ENCODE measurements at regions of chr2 and their contacts with region 1.

Region 1: GRCh38 chr2:30711646-30712085 is 95.6 kb downstream of the CAPN13 start:
- DNase-seq: peak; percentile 72 to 92
- ATAC-seq: peak; percentile 57 to 78 (median 67)
- H3K4me3 ChIP-seq: no peak overlapping the region
- H3K27ac ChIP-seq: no peak overlapping the region
- H3K4me1 ChIP-seq: peaks cover 0 to 32% (median 8%) of the 10 kb centered on the region in 9 donors
- H3K27me3 ChIP-seq: no peaks in the 10 kb centered on the region
- CTCF ChIP-seq: peak; percentile 92 to 100 (median 99)

Region 2: DNA sequence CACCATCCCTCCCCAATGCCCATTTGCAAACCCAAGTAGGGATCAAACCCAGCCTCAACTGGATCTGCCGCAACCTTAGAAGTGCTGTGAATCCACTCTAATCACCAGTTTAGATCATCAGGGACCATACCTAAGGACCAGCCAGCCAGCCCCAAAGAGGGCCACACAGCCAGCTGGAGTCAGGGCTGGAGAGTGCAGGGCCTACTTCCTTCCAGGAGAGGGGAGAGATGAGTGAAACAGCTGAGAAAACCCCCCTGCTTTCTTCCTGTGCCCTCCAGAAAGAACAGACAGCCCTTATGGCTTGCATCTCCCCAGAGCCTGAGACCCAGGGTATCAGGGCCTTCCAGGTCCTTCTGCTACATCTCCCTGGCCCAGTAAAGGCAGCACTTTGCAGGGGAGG is 539.0 kb before region 1 on chr2:
- intact Hi-C with region 1: loop called in 4 of 10 experiments (anchors 5 kb)
- DNase-seq: no peak
- ATAC-seq: no peak
- H3K4me3 ChIP-seq: no peak overlapping the region
- H3K27ac ChIP-seq: no peak overlapping the region
- H3K4me1 ChIP-seq: peaks cover 0 to 6% (median 0%) of the 10 kb centered on the region in 9 donors
- H3K27me3 ChIP-seq: no peaks in the 10 kb centered on the region
- CTCF ChIP-seq: no peak

Region 3: DNA sequence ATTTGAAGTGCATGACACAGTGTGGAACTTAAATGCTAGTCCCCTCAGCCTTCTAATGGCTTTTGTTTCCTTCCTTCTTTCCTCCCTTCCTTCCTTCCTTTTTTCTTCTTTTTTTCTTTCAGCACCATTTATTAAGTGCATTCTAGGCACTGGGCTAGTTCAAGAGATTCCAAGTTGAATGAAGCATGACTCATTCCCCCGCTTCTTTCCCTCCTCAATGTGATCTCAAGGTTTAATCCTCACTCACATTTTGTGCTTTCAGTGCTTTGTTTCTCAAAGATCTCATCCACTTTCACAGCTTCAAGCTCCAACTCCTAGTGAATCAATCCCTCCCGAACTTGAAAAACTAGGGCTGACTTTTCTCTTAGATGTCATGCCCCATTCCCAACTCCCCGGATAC is 390.2 kb before region 1 on chr2:
- intact Hi-C with region 1: loop called in 1 of 10 experiments (anchors 10 kb)
- DNase-seq: no peak
- ATAC-seq: no peak
- H3K4me3 ChIP-seq: no peak overlapping the region
- H3K27ac ChIP-seq: peak overlapping the region in 1 of 10 donors; percentile 0
- H3K4me1 ChIP-seq: peaks cover 0 to 6% (median 0%) of the 10 kb centered on the region in 9 donors
- H3K27me3 ChIP-seq: no peaks in the 10 kb centered on the region
- CTCF ChIP-seq: no peak

Region 4: DNA sequence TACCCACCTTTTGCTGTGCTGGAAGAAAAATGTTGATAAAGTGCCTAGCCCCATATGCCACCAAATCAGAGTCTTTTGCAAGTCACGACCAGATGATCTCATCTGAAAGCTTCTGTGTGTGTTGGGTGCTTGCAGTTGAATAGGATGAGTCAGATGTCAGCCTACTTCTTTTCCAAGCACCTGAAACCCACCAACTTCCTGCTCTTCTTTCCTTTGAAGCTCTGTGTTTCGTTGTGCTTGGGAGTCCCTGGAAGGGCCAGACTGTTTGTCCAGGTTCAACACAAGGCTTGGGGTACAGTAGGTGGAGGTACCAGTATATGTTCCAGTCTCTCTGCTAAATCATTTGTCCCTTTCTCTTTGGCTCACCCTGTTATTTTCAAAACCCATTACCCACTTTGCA is 301.4 kb before region 1 on chr2:
- intact Hi-C with region 1: loop called in 1 of 10 experiments (anchors 5 kb)
- DNase-seq: no peak
- ATAC-seq: no peak
- H3K4me3 ChIP-seq: no peak overlapping the region
- H3K27ac ChIP-seq: peak overlapping the region in 9 of 10 donors; percentile 69 to 92 (median 86)
- H3K4me1 ChIP-seq: peaks cover 30 to 85% (median 67%) of the 10 kb centered on the region in 9 donors
- H3K27me3 ChIP-seq: no peaks in the 10 kb centered on the region
- CTCF ChIP-seq: no peak

Region 5: GRCh38 chr2:30653847-30654246 is 57.8 kb before region 1 on chr2:
- intact Hi-C with region 1: no loop called
- DNase-seq: peak in 1 of 2 donors; percentile 22
- ATAC-seq: peak in 7 of 8 donors; percentile 34 to 74 (median 62)
- H3K4me3 ChIP-seq: no peak overlapping the region
- H3K27ac ChIP-seq: no peak overlapping the region
- H3K4me1 ChIP-seq: peaks cover 0 to 21% (median 0%) of the 10 kb centered on the region in 9 donors
- H3K27me3 ChIP-seq: no peaks in the 10 kb centered on the region
- CTCF ChIP-seq: no peak

Region 6: DNA sequence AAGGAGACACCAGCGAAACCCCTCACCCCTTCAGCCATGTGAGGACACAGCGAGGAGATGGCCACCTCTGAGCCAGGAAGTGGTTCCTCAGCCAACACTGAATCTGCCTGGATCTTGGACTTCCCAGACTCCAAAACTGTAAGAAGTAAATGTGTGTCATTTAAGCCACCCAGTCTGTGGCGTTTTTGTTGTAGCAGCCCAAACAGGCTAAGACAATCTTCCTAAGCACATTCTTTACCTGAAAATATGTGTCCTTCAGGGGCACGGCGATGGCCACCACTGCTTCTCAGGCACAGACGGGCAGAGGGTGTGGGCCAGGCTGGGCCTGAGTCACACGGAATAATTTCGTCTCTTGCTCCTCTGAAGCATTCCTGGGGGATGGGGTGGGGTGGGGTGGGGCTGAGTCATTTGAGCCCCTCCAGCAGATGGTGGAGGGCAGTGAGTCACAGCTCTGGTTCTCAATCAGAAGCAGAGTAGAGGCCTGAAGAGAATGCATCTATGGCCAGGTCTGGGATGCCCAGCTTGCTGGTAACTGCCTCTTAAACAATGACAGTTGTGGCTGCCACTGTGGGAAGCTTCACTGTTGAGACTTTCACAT is 46.8 kb before region 1 on chr2:
- intact Hi-C with region 1: no loop called
- DNase-seq: no peak
- ATAC-seq: peak in 4 of 8 donors; percentile 9 to 65 (median 28)
- H3K4me3 ChIP-seq: no peak overlapping the region
- H3K27ac ChIP-seq: peak overlapping the region in 1 of 10 donors; percentile 74
- H3K4me1 ChIP-seq: peaks cover 0 to 18% (median 3%) of the 10 kb centered on the region in 9 donors
- H3K27me3 ChIP-seq: no peaks in the 10 kb centered on the region
- CTCF ChIP-seq: no peak

Region 7: DNA sequence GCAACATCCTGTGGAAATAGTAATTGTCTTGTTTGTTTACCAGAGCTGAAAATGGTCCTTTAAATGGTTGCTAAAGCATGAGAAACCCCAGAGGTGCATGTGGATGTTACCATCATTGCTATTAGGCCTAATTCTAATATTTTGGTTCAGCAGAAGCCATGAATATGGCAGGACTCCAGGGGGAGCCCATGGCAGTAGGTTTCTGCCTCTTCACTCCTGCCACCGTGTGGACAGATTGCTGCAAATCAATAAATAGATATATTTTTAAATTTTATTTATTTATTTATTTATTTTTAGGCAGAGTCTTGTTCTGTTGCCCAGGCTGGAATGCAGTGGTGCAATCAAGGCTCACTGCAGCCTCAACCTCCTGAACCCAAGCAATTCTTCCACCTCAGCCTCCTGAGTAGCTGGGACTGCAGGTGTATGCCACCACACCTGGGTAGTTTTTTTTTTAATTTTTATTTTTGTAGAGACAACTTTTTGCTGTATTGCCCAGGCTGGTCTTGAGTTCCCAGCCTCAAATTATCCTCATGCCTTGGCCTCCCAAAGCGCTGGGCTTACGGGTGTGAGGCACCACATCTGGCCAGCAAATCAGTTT is 150.5 kb after region 1 on chr2:
- intact Hi-C with region 1: loop called (anchors 2 to 10 kb)
- DNase-seq: peak in 1 of 2 donors; percentile 62
- ATAC-seq: peak in 2 of 8 donors; percentile 27 to 47
- H3K4me3 ChIP-seq: no peak overlapping the region
- H3K27ac ChIP-seq: no peak overlapping the region
- H3K4me1 ChIP-seq: peaks cover 0 to 13% (median 0%) of the 10 kb centered on the region in 9 donors
- H3K27me3 ChIP-seq: no peaks in the 10 kb centered on the region
- CTCF ChIP-seq: peak; percentile 35 to 83 (median 66)

Region 8: DNA sequence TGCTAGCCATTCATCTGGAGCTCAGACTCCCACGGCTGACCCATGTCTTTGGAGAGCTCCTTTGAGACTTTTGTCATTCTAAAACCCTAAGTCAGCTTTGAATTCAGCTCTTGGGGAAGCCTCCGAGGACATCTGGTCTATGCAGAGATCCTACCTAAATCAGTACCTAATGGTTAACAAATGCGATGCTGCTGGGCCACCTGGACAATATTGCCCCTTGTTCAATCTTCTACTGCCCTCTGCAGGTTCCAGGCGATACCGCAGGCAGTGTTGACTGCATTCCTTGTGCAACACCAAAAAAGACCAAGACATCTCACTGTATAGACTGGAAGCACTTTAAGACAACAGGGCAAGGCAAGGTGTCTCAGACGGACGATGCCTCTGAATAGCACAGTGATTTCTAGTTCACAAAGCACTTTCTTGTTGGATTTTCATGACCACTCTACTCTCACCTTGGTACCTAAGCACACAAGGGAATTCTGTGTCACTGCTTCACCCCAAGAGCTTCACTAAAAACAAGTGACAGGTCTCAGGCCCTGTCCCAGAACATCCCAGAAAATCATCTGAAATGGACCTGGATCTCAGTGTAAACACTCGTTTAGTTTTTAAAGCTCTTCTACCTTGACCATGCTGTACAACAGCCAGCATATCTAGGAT is 622.0 kb after region 1 on chr2:
- intact Hi-C with region 1: loop called (anchors 2 to 5 kb)
- DNase-seq: peak; percentile 72 to 81
- ATAC-seq: peak; percentile 69 to 90 (median 82)
- H3K4me3 ChIP-seq: no peak overlapping the region
- H3K27ac ChIP-seq: no peak overlapping the region
- H3K4me1 ChIP-seq: peaks cover 0 to 23% (median 0%) of the 10 kb centered on the region in 9 donors
- H3K27me3 ChIP-seq: no peaks in the 10 kb centered on the region
- CTCF ChIP-seq: peak; percentile 82 to 98 (median 96)

Measured in heart right ventricle (tissue), 16 donors.